ENCODE measurements at regions of chr9 and their contacts with region 1.

Region 1: DNA sequence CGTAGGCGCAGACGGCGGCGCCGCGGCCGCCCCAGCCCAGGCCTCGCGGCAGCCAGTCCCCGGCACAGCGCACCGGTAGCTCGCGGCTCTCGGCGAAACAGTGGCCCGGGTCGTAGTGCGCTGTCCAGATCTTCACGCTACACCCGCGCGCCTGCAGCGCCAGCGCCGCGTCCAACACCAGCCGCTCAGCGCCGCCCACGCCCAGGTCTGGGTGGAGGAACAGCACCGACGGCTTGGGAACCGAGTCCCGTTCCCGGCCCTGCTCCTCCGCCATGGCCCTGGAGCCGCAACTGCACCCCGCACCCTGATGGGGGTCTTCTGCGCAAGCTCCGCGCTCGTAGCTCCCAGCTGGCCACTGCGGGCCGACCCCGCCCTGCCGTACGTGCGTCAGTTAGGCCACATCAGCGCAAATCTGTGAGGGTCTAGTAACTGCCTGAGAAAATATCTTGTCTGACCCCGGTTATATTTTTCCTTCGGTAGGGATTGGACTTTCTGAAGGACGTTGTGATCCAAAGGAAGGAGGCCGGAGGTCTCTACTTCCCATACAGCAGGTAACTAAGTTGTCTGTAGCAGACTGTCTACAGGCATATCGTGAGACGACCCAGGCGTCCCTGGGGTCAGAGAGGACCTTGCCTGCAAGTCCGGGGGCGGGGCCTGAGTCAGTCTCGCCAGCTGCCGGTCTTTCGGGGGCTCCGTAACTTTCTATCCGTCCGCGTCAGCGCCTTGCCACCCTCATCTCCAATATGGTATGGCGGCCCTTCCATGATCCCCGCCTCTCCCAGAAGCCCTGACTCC is at the starts of genes ALG2 and SEC61B:
- DNase-seq: peak; percentile 91 to 93
- ATAC-seq: peak; percentile 94 to 95
- H3K4me3 ChIP-seq: peak within 1 kb of the TSS; percentile 89 to 98 (median 94)
- H3K27ac ChIP-seq: peak within 1 kb of the TSS; percentile 88 to 98 (median 96)
- H3K4me1 ChIP-seq: peaks cover 70 to 77% of the 10 kb centered on the region in 2 donors
- H3K27me3 ChIP-seq: no peaks in the 10 kb centered on the region
- CTCF ChIP-seq: no peak
- POLR2A ChIP-seq: peak; percentile 98
- total RNA-seq, gene ALG2: 12.3 to 19.9 (median 14.7) TPM
- total RNA-seq, gene SEC61B: 20.5 to 50.5 (median 24.9) TPM

Region 2: DNA sequence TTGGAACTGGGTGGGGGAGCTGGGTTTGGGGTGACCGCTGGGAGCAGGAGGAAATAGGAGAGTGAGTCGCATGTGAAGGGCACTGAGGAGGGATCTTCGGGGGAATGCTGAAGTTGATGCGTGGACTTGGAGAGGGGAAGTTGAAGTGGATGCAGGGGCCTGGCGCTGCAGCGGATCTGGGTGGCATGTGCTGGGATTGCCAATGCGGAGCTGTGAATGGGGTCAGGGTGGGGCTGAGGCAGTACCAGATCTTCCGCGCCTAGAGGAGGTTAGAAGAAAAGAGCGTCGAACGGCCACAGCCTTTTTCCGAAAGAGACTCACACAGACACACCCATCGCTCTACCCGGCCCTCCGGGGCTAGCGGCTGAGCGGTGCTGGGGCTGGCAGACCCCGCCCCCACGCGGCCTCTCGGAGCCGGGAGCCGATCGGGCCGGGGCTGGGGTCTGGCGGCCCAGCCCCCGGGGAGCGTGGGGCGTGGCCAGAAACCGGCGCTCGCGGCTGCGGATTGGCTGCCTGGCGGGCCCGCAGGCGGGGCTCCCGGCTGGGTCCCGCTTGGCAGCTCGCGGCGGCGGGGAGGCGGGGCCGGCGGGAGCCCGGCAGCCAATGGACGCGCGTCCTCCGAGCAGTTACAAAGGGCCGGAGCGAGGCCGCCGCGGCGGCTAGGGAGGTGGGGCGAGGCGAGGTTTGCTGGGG is 117.2 kb before region 1 on chr9 and contains the start of gene TGFBR1:
- in situ Hi-C with region 1: no loop called
- intact Hi-C with region 1: loop called (anchors 5 kb)
- DNase-seq: peak; percentile 87 to 91
- ATAC-seq: peak; percentile 86 to 89
- H3K4me3 ChIP-seq: peak within 1 kb of the TSS; percentile 73 to 97 (median 86)
- H3K27ac ChIP-seq: peak within 1 kb of the TSS; percentile 80 to 91 (median 88)
- H3K4me1 ChIP-seq: peaks cover 39 to 50% of the 10 kb centered on the region in 2 donors
- H3K27me3 ChIP-seq: no peaks in the 10 kb centered on the region
- CTCF ChIP-seq: no peak
- POLR2A ChIP-seq: peak; percentile 94 to 98
- total RNA-seq, gene TGFBR1: 13.5 to 19.0 (median 14.3) TPM

Region 3: GRCh38 chr9:99140685-99141314 is 81.0 kb before region 1 on chr9:
- in situ Hi-C with region 1: no loop called
- intact Hi-C with region 1: no loop called
- DNase-seq: peak; percentile 19 to 26
- ATAC-seq: peak; percentile 79 to 88
- H3K4me3 ChIP-seq: no peak overlapping the region
- H3K27ac ChIP-seq: no peak overlapping the region
- H3K4me1 ChIP-seq: peaks cover 23 to 37% of the 10 kb centered on the region in 2 donors
- H3K27me3 ChIP-seq: no peaks in the 10 kb centered on the region
- CTCF ChIP-seq: peak; percentile 81 to 96 (median 93)
- POLR2A ChIP-seq: no peak

Region 4: GRCh38 chr9:99259231-99259918 is 37.6 kb after region 1 on chr9:
- in situ Hi-C with region 1: no loop called
- intact Hi-C with region 1: loop called (anchors 1 kb)
- DNase-seq: peak; percentile 97 to 99
- ATAC-seq: peak; percentile 59 to 63
- H3K4me3 ChIP-seq: peak overlapping the region; percentile 34 to 49 (median 44)
- H3K27ac ChIP-seq: peak overlapping the region; percentile 93 to 100 (median 98)
- H3K4me1 ChIP-seq: peaks cover 29 to 48% of the 10 kb centered on the region in 2 donors
- H3K27me3 ChIP-seq: no peaks in the 10 kb centered on the region
- CTCF ChIP-seq: peak in 1 of 5 experiments; percentile 38
- POLR2A ChIP-seq: peak; percentile 91 to 94

Region 5: DNA sequence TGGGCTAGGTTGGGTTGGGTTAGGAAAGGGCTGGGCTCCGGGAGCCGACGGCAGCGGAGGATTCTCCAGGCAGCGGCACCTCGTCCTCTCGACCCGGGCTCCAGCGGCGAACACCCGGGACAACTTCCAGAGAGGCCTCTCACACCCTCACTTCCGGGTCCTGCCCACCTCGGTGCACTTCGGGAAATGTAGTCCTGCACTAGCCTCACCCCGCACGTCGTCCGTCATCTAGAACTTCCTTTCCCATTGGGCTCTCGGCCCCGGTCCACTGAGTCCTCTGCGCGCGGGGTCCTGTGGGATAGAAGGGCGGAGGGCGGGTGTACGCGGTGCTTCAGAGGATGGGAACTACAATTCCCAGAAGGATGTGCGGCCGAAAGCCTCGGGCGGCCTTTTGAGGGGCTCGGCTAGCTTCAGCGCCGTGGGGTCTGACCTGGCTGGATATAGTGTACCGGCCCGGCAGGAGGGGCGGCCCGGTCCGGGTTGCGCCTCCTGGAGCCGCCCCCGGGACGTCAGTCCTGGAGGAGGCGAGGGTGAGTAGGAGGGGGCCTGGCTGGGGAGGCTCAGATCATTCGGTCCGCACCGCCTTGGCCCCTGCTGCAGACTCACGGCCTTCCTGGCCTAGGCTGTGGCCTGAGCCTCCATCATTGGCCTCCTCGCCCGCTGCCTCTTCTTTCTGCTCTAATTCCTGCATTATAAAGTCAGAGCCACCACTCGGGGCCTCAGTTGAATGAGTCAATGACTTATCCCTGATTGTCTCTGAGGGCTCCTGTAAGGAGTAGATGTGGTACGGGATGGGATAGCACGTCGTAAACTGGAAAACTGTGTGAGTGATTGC is 877.3 kb after region 1 on chr9 and contains the starts of genes ERP44 and INVS:
- in situ Hi-C with region 1: no loop called
- intact Hi-C with region 1: loop called (anchors 5 kb)
- DNase-seq: peak; percentile 99 to 100
- ATAC-seq: peak; percentile 95
- H3K4me3 ChIP-seq: peak within 1 kb of the TSS; percentile 87 to 98 (median 98)
- H3K27ac ChIP-seq: peak within 1 kb of the TSS; percentile 90 to 99 (median 95)
- H3K4me1 ChIP-seq: peaks cover 31 to 38% of the 10 kb centered on the region in 2 donors
- H3K27me3 ChIP-seq: no peaks in the 10 kb centered on the region
- CTCF ChIP-seq: no peak
- POLR2A ChIP-seq: peak; percentile 92 to 94
- total RNA-seq, gene ERP44: 7.0 to 10.8 (median 9.7) TPM
- total RNA-seq, gene INVS: 5.5 to 13.9 (median 6.7) TPM

Region 6: GRCh38 chr9:100111235-100111634 is 889.4 kb after region 1 on chr9:
- in situ Hi-C with region 1: no loop called
- intact Hi-C with region 1: loop called (anchors 5 kb)
- DNase-seq: peak; percentile 87 to 92
- ATAC-seq: peak; percentile 99 to 100
- H3K4me3 ChIP-seq: no peak overlapping the region
- H3K27ac ChIP-seq: peak overlapping the region; percentile 60 to 72 (median 66)
- H3K4me1 ChIP-seq: peaks cover 11 to 37% of the 10 kb centered on the region in 2 donors
- H3K27me3 ChIP-seq: no peaks in the 10 kb centered on the region
- CTCF ChIP-seq: no peak
- POLR2A ChIP-seq: no peak

Region 7: GRCh38 chr9:100352727-100353505 is 1131.1 kb after region 1 on chr9 and contains the start of gene TEX10:
- in situ Hi-C with region 1: no loop called
- intact Hi-C with region 1: loop called (anchors 10 kb)
- DNase-seq: peak; percentile 77 to 83
- ATAC-seq: peak; percentile 93 to 97
- H3K4me3 ChIP-seq: peak within 1 kb of the TSS; percentile 80 to 95 (median 84)
- H3K27ac ChIP-seq: peak within 1 kb of the TSS; percentile 77 to 90 (median 86)
- H3K4me1 ChIP-seq: peaks cover 13 to 17% of the 10 kb centered on the region in 2 donors
- H3K27me3 ChIP-seq: no peaks in the 10 kb centered on the region
- CTCF ChIP-seq: peak in 2 of 5 experiments; percentile 9 to 20
- POLR2A ChIP-seq: peak; percentile 66 to 71
- total RNA-seq, gene TEX10: 16.0 to 20.5 (median 18.4) TPM